HEK293 (cell line): ENCODE measurements at regions of chr20 and their contacts with region 1.

Region 1: GRCh38 chr20:14055127-14055742 is 59.9 kb downstream of the MACROD2 start:
- H3K4me3 ChIP-seq: no peak overlapping the region
- H3K27ac ChIP-seq: no peak overlapping the region
- H3K4me1 ChIP-seq: no peaks in the 10 kb centered on the region
- CTCF ChIP-seq: peak; percentile 22; the same call in 1 of the 2 replicates

Region 2: GRCh38 chr20:14036567-14036966 is 18.7 kb before region 1 on chr20:
- CTCF ChIA-PET with region 1: interaction called, 23 read pairs
- POLR2A ChIA-PET with region 1: no interaction called
- H3K4me3 ChIP-seq: no peak overlapping the region
- H3K27ac ChIP-seq: no peak overlapping the region
- H3K4me1 ChIP-seq: no peaks in the 10 kb centered on the region
- CTCF ChIP-seq: no peak

Region 3: DNA sequence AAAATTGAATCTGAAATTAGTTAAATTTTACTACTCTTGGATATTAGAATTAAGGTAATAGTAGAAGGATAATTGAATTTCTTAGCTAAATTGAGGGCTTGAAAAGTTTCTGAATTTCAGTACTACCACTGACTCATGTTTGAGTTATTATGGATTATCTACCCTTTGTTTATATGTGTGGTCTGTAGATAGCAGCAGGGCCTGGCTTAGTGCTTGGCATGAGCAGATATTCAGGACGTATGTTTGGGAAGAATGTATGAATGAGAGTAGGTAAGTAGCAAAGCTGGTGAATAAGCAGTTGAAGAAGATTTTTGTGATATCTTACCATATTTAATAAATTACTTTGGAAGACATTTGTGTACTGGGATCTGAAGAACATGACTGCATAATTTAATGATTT is 92.8 kb after region 1 on chr20:
- CTCF ChIA-PET with region 1: no interaction called
- POLR2A ChIA-PET with region 1: no interaction called
- H3K4me3 ChIP-seq: no peak overlapping the region
- H3K27ac ChIP-seq: no peak overlapping the region
- H3K4me1 ChIP-seq: peaks cover 2% of the 10 kb centered on the region; the same call in 1 of the 2 replicates
- CTCF ChIP-seq: no peak